ENCODE measurements at regions of chr9 and their contacts with region 1.

Region 1: GRCh38 chr9:25350011-25350410 is 328.2 kb downstream of the TUSC1 start:
- DNase-seq: no peak
- H3K4me3 ChIP-seq: no peak overlapping the region
- H3K27ac ChIP-seq: no peak overlapping the region
- H3K4me1 ChIP-seq: no peaks in the 10 kb centered on the region
- H3K27me3 ChIP-seq: no peaks in the 10 kb centered on the region
- CTCF ChIP-seq: no peak
- POLR2A ChIP-seq: no peak

Region 2: GRCh38 chr9:25284365-25284764 is 65.6 kb before region 1 on chr9:
- CTCF ChIA-PET with region 1: no interaction called
- POLR2A ChIA-PET with region 1: no interaction called
- dilution Hi-C with region 1: no loop called
- intact Hi-C with region 1: no loop called
- DNase-seq: no peak
- H3K4me3 ChIP-seq: no peak overlapping the region
- H3K27ac ChIP-seq: no peak overlapping the region
- H3K4me1 ChIP-seq: no peaks in the 10 kb centered on the region
- H3K27me3 ChIP-seq: no peaks in the 10 kb centered on the region
- CTCF ChIP-seq: no peak
- POLR2A ChIP-seq: no peak

Region 3: GRCh38 chr9:25412646-25413045 is 62.6 kb after region 1 on chr9:
- CTCF ChIA-PET with region 1: no interaction called
- POLR2A ChIA-PET with region 1: no interaction called
- dilution Hi-C with region 1: no loop called
- intact Hi-C with region 1: loop called (anchors 10 kb)
- DNase-seq: no peak
- H3K4me3 ChIP-seq: no peak overlapping the region
- H3K27ac ChIP-seq: no peak overlapping the region
- H3K4me1 ChIP-seq: no peaks in the 10 kb centered on the region
- H3K27me3 ChIP-seq: no peaks in the 10 kb centered on the region
- CTCF ChIP-seq: no peak
- POLR2A ChIP-seq: no peak

Region 4: DNA sequence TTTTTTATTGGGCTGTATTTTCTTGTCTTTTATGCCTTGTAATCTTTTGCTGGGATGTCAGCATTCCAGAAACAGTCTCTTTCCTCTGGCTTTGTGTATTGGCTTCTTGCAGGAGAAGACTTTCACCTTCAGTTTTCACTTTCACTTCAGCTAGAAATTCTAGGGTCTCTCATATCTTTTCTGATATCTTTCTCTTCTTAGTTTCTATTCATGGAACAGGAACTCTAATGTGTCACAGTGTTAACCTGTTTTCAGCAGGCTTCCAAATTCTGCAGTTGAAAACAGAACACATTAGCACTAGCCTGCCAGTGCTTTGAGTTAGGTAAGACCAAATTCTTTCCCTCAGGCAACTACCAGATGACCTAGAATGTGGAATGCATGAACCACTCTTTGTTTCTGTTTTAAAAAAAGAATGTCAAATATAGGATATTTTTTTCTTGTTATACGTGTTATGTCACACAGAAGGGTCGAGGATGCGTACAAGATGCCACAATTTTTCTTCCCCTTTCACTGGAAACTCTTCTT is 163.6 kb after region 1 on chr9:
- CTCF ChIA-PET with region 1: no interaction called
- POLR2A ChIA-PET with region 1: no interaction called
- dilution Hi-C with region 1: no loop called
- intact Hi-C with region 1: no loop called
- DNase-seq: no peak
- H3K4me3 ChIP-seq: no peak overlapping the region
- H3K27ac ChIP-seq: no peak overlapping the region
- H3K4me1 ChIP-seq: no peaks in the 10 kb centered on the region
- H3K27me3 ChIP-seq: no peaks in the 10 kb centered on the region
- CTCF ChIP-seq: no peak
- POLR2A ChIP-seq: no peak

Region 5: GRCh38 chr9:26264709-26265601 is 914.9 kb after region 1 on chr9:
- CTCF ChIA-PET with region 1: no interaction called
- POLR2A ChIA-PET with region 1: no interaction called
- dilution Hi-C with region 1: no loop called
- intact Hi-C with region 1: no loop called
- DNase-seq: peak; percentile 51
- H3K4me3 ChIP-seq: no peak overlapping the region
- H3K27ac ChIP-seq: peak overlapping the region; percentile 37
- H3K4me1 ChIP-seq: peaks cover 43% of the 10 kb centered on the region
- H3K27me3 ChIP-seq: no peaks in the 10 kb centered on the region
- CTCF ChIP-seq: no peak
- POLR2A ChIP-seq: no peak